Cardiac septum (tissue), 1 donor: ENCODE measurements at regions of chr9 and their contacts with region 1.

Region 1: GRCh38 chr9:123975871-123976270 is 35.7 kb upstream of the LHX2 start:
- DNase-seq: no peak

Region 2: DNA sequence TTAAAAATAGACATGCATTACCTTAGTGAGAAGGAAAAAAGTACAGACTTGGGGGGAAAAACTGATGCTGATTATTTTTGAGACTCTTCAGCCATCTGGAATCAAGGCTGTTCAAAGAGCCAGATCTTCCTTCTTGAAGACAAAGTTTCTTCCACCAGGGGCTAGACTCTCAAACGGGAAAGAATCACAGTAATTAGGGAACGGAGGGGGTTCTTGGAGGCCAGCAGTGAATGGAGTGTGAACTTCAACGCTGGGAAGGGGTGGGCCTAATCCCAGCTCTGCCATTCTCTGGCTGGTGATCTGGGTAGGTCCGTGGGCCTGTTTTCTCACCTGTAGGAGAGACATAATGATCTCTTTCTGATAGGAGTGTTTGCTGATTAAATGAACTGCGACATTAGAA is 14.6 kb after region 1 on chr9:
- intact Hi-C with region 1: loop called (anchors 2 kb)
- DNase-seq: peak; percentile 33

Region 3: GRCh38 chr9:123997665-123998277 is 21.9 kb after region 1 on chr9:
- intact Hi-C with region 1: loop called (anchors 2 kb)
- DNase-seq: no peak